PC-9 (cell line): ENCODE measurements at regions of chr9 and their contacts with region 1.

Region 1: DNA sequence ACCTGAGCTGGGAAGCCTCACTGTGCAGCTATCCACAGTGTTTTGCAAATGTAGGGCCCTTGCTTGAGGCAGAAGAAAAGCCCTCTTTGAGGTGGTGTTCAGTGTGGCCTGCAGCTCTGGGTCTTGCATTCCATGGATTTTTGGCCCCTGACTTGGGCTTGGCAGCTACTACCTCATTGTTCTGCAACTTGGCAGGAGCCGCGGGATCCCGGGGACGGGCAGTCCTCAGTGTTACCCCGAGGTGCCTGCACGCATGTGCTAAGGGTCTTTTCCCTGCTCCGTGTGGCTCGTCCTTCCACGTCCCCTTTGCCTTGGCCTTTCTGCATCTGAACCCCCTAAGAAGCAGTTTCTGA is 39.8 kb downstream of the NEK6 start:
- DNase-seq: peak; percentile 92 to 94
- H3K4me3 ChIP-seq: no peak overlapping the region
- H3K27ac ChIP-seq: 0 out of 2 replicates have a peak overlapping the region, but pooled peaks have one; percentile 6
- H3K4me1 ChIP-seq: peaks cover 66% of the 10 kb centered on the region
- H3K27me3 ChIP-seq: no peaks in the 10 kb centered on the region
- CTCF ChIP-seq: no peak

Region 2: GRCh38 chr9:124138993-124139392 is 158.5 kb before region 1 on chr9:
- CTCF ChIA-PET with region 1: no interaction called
- POLR2A ChIA-PET with region 1: no interaction called
- intact Hi-C with region 1: loop called (anchors 1 kb)
- DNase-seq: no peak
- H3K4me3 ChIP-seq: no peak overlapping the region
- H3K27ac ChIP-seq: no peak overlapping the region
- H3K4me1 ChIP-seq: peaks cover 32% of the 10 kb centered on the region
- H3K27me3 ChIP-seq: no peaks in the 10 kb centered on the region
- CTCF ChIP-seq: no peak

Region 3: GRCh38 chr9:124239249-124240073 is 58.1 kb before region 1 on chr9:
- CTCF ChIA-PET with region 1: no interaction called
- POLR2A ChIA-PET with region 1: interaction called, 27 read pairs
- intact Hi-C with region 1: no loop called
- DNase-seq: no peak
- H3K4me3 ChIP-seq: no peak overlapping the region
- H3K27ac ChIP-seq: no peak overlapping the region
- H3K4me1 ChIP-seq: no peaks in the 10 kb centered on the region
- H3K27me3 ChIP-seq: no peaks in the 10 kb centered on the region
- CTCF ChIP-seq: no peak